Adrenal gland (tissue), 19 donors: ENCODE measurements at regions of chr12 and their contacts with region 1.

Region 1: GRCh38 chr12:92505254-92506231 is 197.2 kb upstream of the PLEKHG7 start:
- DNase-seq: peak in 6 of 7 donors; percentile 44 to 81 (median 60)
- H3K4me3 ChIP-seq: peak overlapping the region in 1 of 4 donors; percentile 19
- H3K27ac ChIP-seq: peak overlapping the region in 4 of 5 donors; percentile 20 to 91 (median 62)
- H3K4me1 ChIP-seq: peaks cover 19 to 32% of the 10 kb centered on the region in 2 donors
- H3K27me3 ChIP-seq: no peaks in the 10 kb centered on the region
- CTCF ChIP-seq: no peak
- POLR2A ChIP-seq: no peak

Region 2: DNA sequence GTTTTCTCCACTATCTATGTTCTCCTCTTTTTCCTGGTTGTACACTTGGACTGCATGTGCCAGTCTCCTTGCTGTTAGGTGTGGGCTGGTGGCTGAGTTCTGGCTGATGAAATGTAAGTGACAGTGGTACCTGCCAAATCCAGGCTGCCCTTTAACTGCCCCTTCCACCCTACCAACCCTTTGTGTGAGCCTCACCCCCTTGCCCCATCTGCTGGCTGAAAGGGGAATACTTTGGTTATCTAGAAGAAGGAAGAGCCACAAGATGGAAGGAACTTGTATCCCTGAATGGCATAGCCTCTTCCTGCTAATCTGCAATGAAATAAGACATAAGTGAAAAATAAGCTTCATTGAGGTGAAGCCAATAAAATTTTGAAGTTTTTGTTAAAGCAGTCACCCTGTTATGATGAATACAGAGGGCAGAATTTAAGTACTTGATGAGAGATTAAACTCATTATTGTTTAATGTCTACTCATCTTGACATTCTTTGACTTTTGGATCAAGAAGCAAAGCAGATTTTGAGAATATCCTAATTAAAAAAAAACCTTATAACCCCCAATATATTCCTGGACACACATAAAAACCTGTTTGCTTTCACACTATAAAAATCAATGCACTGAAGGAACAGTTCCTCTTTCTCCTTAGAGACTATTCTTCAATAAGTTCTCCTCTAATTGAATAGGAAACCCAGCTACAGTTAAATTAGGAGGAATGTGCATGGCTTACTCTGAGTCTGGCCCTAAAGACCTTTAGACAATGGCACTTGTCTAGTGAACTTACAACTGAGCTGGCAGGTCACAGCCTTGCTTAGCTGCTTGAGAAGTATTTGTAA is 97.3 kb before region 1 on chr12:
- intact Hi-C with region 1: no loop called
- DNase-seq: peak in 4 of 7 donors; percentile 23 to 67 (median 38)
- H3K4me3 ChIP-seq: no peak overlapping the region
- H3K27ac ChIP-seq: no peak overlapping the region
- H3K4me1 ChIP-seq: no peaks in the 10 kb centered on the region
- H3K27me3 ChIP-seq: no peaks in the 10 kb centered on the region
- CTCF ChIP-seq: peak in 5 of 6 experiments; percentile 2 to 56 (median 32)
- POLR2A ChIP-seq: no peak

Region 3: GRCh38 chr12:92551853-92552397 is 46.4 kb after region 1 on chr12:
- intact Hi-C with region 1: loop called in 1 of 2 experiments (anchors 10 kb)
- DNase-seq: peak in 5 of 7 donors; percentile 18 to 54 (median 35)
- H3K4me3 ChIP-seq: no peak overlapping the region
- H3K27ac ChIP-seq: peak overlapping the region in 3 of 5 donors; percentile 49 to 69 (median 53)
- H3K4me1 ChIP-seq: peaks cover 35 to 58% of the 10 kb centered on the region in 2 donors
- H3K27me3 ChIP-seq: no peaks in the 10 kb centered on the region
- CTCF ChIP-seq: no peak
- POLR2A ChIP-seq: no peak

Region 4: GRCh38 chr12:92769124-92769901 is 263.8 kb after region 1 on chr12:
- intact Hi-C with region 1: no loop called
- DNase-seq: peak in 1 of 7 donors; percentile 17
- H3K4me3 ChIP-seq: no peak overlapping the region
- H3K27ac ChIP-seq: peak overlapping the region in 1 of 5 donors; percentile 27
- H3K4me1 ChIP-seq: peaks cover 0 to 7% of the 10 kb centered on the region in 2 donors
- H3K27me3 ChIP-seq: no peaks in the 10 kb centered on the region
- CTCF ChIP-seq: no peak
- POLR2A ChIP-seq: no peak